BJ (cell line): ENCODE measurements at regions of chr2 and their contacts with region 1.

Region 1: GRCh38 chr2:181104512-181105115 is 124.2 kb downstream of the UBE2E3 start:
- DNase-seq: no peak
- H3K4me3 ChIP-seq: no peak overlapping the region
- H3K27me3 ChIP-seq: no peaks in the 10 kb centered on the region
- CTCF ChIP-seq: peak; percentile 81

Region 2: GRCh38 chr2:180125245-180125962 is 979.2 kb before region 1 on chr2:
- CTCF ChIA-PET with region 1: interaction called, 19 read pairs
- POLR2A ChIA-PET with region 1: no interaction called
- DNase-seq: peak; percentile 82
- H3K4me3 ChIP-seq: no peak overlapping the region
- H3K27me3 ChIP-seq: no peaks in the 10 kb centered on the region
- CTCF ChIP-seq: peak; percentile 77

Region 3: GRCh38 chr2:180276733-180277132 is 827.9 kb before region 1 on chr2:
- CTCF ChIA-PET with region 1: no interaction called
- POLR2A ChIA-PET with region 1: no interaction called
- DNase-seq: no peak
- H3K4me3 ChIP-seq: no peak overlapping the region
- H3K27me3 ChIP-seq: no peaks in the 10 kb centered on the region
- CTCF ChIP-seq: no peak

Region 4: GRCh38 chr2:181457121-181457740 is 352.6 kb after region 1 on chr2 and contains the start of gene ITGA4:
- CTCF ChIA-PET with region 1: interaction called, 40 read pairs
- POLR2A ChIA-PET with region 1: no interaction called
- DNase-seq: no peak
- H3K4me3 ChIP-seq: peak within 1 kb of the TSS; percentile 69
- H3K27me3 ChIP-seq: no peaks in the 10 kb centered on the region
- CTCF ChIP-seq: peak; percentile 72
- polyA plus RNA-seq, gene ITGA4: 17.6 and 37.3 TPM in 2 replicates

Region 5: GRCh38 chr2:181466661-181467576 is 362.3 kb after region 1 on chr2:
- CTCF ChIA-PET with region 1: interaction called, 44 read pairs
- POLR2A ChIA-PET with region 1: no interaction called
- DNase-seq: no peak
- H3K4me3 ChIP-seq: no peak overlapping the region
- H3K27me3 ChIP-seq: no peaks in the 10 kb centered on the region
- CTCF ChIP-seq: peak; percentile 77

Region 6: GRCh38 chr2:181715033-181715630 is 610.5 kb after region 1 on chr2:
- CTCF ChIA-PET with region 1: interaction called, 60 read pairs
- POLR2A ChIA-PET with region 1: no interaction called
- DNase-seq: peak; percentile 25
- H3K4me3 ChIP-seq: no peak overlapping the region
- H3K27me3 ChIP-seq: no peaks in the 10 kb centered on the region; the same call in 1 of the 2 replicates
- CTCF ChIP-seq: peak; percentile 65